ENCODE measurements at regions of chr6 and their contacts with region 1.

Region 1: DNA sequence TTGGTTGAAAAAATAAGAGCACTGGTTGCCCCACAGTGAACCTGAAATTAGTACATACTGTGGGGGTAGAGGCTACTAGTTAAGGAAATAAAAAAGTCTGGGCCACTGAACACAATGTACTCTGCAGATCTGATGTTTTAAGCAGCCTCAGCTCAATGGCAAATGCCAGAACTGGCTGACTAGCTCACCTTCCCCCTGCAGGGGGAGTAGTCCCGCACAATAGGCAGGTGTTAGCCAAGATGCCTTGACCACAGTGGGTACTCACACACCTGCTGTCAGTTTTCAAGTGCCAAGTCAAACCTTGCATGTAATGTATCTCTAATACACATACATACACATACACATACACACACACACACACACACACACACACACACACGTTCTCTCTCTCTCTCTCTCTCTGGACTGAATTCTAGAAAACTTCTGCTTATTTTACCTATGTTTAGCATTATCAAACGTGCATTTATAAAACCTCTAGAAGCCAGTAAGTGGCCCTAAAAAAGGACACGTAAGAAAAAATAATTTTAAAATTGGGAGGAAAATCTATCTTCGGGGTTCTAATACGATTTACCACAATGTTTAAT is 36.1 kb downstream of the GMDS start:
- DNase-seq: peak; percentile 55
- H3K4me3 Mint-ChIP-seq: no peak overlapping the region
- H3K27ac Mint-ChIP-seq: no peak overlapping the region
- H3K4me1 Mint-ChIP-seq: no peaks in the 10 kb centered on the region
- H3K27me3 Mint-ChIP-seq: no peaks in the 10 kb centered on the region

Region 2: DNA sequence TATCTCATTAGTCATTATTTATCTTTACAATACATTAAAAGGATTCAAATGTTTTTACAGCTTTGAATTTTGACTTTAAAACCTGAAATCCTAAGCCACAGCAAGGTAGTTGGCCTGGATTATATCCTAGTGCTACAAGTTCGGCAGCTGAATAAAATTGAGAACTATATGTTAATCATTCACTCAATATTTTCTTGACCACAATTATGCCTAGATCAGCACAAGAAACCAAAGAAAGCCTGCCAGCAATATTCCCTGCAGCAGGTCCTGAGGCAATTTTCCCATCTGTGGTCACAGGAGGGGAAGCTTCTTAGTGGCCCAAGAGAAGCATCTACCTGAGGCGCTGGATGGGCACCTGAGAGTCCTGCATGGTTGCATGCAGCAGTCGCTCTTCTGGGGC is 147.4 kb before region 1 on chr6:
- CTCF ChIA-PET with region 1: no interaction called
- POLR2A ChIA-PET with region 1: no interaction called
- intact Hi-C with region 1: no loop called
- DNase-seq: no peak
- H3K4me3 Mint-ChIP-seq: no peak overlapping the region
- H3K27ac Mint-ChIP-seq: no peak overlapping the region
- H3K4me1 Mint-ChIP-seq: no peaks in the 10 kb centered on the region
- H3K27me3 Mint-ChIP-seq: no peaks in the 10 kb centered on the region

Region 3: DNA sequence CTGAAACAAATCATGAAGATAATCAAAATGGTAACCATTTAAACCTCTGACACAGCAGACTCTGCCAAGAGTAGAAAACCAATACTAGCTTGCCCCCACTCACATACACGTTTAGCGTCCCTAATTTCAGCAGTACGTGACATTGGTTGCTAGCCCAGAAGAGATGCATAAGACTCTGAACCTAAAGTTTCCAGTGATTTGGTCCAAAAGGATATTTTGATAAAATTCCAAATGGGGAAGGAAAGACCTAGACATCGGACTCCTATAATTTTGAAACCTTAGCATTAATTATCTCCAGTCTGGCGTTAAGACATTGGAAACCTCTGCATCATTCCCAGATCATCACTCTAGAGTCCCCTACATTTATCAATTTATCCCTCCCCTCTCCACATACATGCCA is 62.1 kb before region 1 on chr6:
- CTCF ChIA-PET with region 1: no interaction called
- POLR2A ChIA-PET with region 1: no interaction called
- intact Hi-C with region 1: no loop called
- DNase-seq: no peak
- H3K4me3 Mint-ChIP-seq: no peak overlapping the region
- H3K27ac Mint-ChIP-seq: no peak overlapping the region
- H3K4me1 Mint-ChIP-seq: no peaks in the 10 kb centered on the region
- H3K27me3 Mint-ChIP-seq: no peaks in the 10 kb centered on the region

Region 4: GRCh38 chr6:2196079-2196679 is 13.1 kb before region 1 on chr6:
- CTCF ChIA-PET with region 1: interaction called, 11 read pairs
- POLR2A ChIA-PET with region 1: no interaction called
- intact Hi-C with region 1: no loop called
- DNase-seq: no peak
- H3K4me3 Mint-ChIP-seq: no peak overlapping the region
- H3K27ac Mint-ChIP-seq: no peak overlapping the region
- H3K4me1 Mint-ChIP-seq: no peaks in the 10 kb centered on the region
- H3K27me3 Mint-ChIP-seq: no peaks in the 10 kb centered on the region

Region 5: GRCh38 chr6:2353412-2354137 is 144.3 kb after region 1 on chr6:
- CTCF ChIA-PET with region 1: interaction called, 29 read pairs
- POLR2A ChIA-PET with region 1: no interaction called
- intact Hi-C with region 1: loop called (anchors 1 kb)
- DNase-seq: peak; percentile 70
- H3K4me3 Mint-ChIP-seq: no peak overlapping the region
- H3K27ac Mint-ChIP-seq: no peak overlapping the region
- H3K4me1 Mint-ChIP-seq: no peaks in the 10 kb centered on the region
- H3K27me3 Mint-ChIP-seq: no peaks in the 10 kb centered on the region

Region 6: DNA sequence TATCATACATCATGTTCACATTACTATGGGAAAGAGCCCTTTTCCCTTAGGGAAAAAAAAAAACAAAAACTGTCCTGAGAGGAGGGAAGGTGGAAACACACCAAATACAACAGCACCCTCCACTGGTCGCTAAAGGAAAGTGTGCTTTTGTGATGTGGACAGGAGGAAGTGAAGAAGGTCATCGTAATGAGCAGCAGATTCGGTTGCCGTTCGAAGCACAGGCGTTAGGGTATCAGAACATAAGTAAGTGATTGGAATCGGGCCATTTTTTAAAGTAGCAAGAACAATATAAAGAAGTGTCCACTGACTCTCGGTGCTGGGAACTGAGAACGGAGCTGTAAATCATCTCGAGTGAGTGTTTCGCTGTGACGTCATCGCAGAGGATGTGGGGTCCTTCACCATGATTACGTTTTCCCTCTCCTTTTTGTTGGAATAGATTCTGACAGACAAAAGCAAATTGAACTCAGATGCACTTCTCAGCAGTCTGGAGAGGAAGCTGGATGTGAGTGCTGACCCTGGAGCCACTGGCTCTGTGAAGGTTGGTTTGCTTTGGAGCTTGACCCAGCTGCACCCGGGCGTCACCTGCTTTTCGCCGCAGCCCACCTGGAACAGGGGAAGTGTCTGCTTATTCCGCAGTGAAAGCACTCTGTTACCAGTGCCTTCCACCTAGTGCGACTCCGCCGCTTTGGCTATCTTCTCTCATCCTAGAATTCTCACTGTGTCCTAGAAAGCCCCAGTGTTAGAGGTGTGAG is 239.7 kb after region 1 on chr6:
- CTCF ChIA-PET with region 1: interaction called, 4 read pairs
- POLR2A ChIA-PET with region 1: no interaction called
- intact Hi-C with region 1: loop called (anchors 2 kb)
- DNase-seq: peak; percentile 34
- H3K4me3 Mint-ChIP-seq: peak overlapping the region; percentile 14
- H3K27ac Mint-ChIP-seq: no peak overlapping the region
- H3K4me1 Mint-ChIP-seq: peaks cover 3% of the 10 kb centered on the region
- H3K27me3 Mint-ChIP-seq: peaks cover 3% of the 10 kb centered on the region

Region 7: GRCh38 chr6:2505624-2506023 is 296.3 kb after region 1 on chr6:
- CTCF ChIA-PET with region 1: no interaction called
- POLR2A ChIA-PET with region 1: no interaction called
- intact Hi-C with region 1: no loop called
- DNase-seq: peak; percentile 12
- H3K4me3 Mint-ChIP-seq: no peak overlapping the region
- H3K27ac Mint-ChIP-seq: no peak overlapping the region
- H3K4me1 Mint-ChIP-seq: no peaks in the 10 kb centered on the region
- H3K27me3 Mint-ChIP-seq: peaks cover 42% of the 10 kb centered on the region